HAP-1 (cell line): ENCODE measurements at regions of chr17 and their contacts with region 1.

Region 1: GRCh38 chr17:45135192-45135977 is at the start of gene ACBD4:
- DNase-seq: peak; percentile 97 to 98
- H3K4me3 ChIP-seq: peak within 1 kb of the TSS; percentile 46
- H3K4me1 ChIP-seq: peaks cover 14% of the 10 kb centered on the region
- H3K27me3 ChIP-seq: no peaks in the 10 kb centered on the region

Region 2: GRCh38 chr17:45087504-45087975 is 47.8 kb before region 1 on chr17:
- in situ Hi-C with region 1: no loop called
- DNase-seq: no peak
- H3K4me3 ChIP-seq: no peak overlapping the region
- H3K4me1 ChIP-seq: no peaks in the 10 kb centered on the region
- H3K27me3 ChIP-seq: no peaks in the 10 kb centered on the region

Region 3: GRCh38 chr17:45197555-45198334 is 62.4 kb after region 1 on chr17:
- in situ Hi-C with region 1: loop called (anchors 5 kb)
- DNase-seq: peak; percentile 78 to 97
- H3K4me3 ChIP-seq: no peak overlapping the region
- H3K4me1 ChIP-seq: peaks cover 8% of the 10 kb centered on the region
- H3K27me3 ChIP-seq: no peaks in the 10 kb centered on the region

Region 4: GRCh38 chr17:45364531-45365390 is 229.4 kb after region 1 on chr17:
- in situ Hi-C with region 1: no loop called
- DNase-seq: peak in 1 of 2 experiments; percentile 59
- H3K4me3 ChIP-seq: no peak overlapping the region
- H3K4me1 ChIP-seq: no peaks in the 10 kb centered on the region
- H3K27me3 ChIP-seq: peaks cover 5% of the 10 kb centered on the region

Region 5: GRCh38 chr17:45739786-45740185 is 604.4 kb after region 1 on chr17:
- in situ Hi-C with region 1: no loop called
- DNase-seq: no peak
- H3K4me3 ChIP-seq: no peak overlapping the region
- H3K4me1 ChIP-seq: no peaks in the 10 kb centered on the region
- H3K27me3 ChIP-seq: peaks cover 32% of the 10 kb centered on the region